Posterior vena cava (tissue), 2 donors: ENCODE measurements at regions of chr3 and their contacts with region 1.

Region 1: DNA sequence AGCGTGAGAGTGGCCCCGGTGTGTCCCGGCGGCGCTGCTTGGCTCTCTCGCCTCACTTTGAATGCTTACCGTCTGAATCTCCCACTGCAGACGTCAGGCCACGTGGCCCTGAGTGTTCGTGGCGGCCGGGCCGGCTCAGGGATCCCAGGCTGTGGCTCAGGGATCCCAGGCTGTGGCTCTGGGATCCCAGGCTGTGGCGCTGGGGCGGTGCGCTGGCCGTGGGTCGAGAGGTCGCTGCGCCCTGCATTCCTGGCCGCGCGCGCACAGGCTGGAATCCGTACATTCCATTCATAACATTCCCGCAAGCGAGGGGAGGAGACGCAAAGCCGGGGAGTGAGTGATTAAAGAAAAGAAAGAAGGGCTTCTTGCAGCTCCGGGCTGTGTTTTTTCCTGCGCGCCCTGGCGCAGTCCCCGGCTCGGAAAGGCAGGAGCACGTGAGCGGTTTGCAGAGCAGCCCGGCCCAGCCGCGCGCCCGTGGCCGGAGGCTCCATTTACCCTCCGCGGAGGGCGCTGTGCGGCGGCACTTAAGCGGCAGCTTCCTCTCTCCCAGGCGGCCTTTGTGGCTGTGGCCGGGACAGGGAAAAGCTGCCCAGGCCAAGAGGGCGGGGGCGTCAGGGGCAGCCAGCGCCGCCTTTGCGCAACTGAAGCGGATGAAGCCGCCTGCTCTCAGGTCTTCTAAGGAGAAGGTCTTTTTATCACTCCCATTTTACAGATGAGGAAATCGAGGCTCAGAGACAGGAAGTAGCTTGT is 87.0 kb upstream of the ALDH1L1 start:
- DNase-seq: peak; percentile 93

Region 2: DNA sequence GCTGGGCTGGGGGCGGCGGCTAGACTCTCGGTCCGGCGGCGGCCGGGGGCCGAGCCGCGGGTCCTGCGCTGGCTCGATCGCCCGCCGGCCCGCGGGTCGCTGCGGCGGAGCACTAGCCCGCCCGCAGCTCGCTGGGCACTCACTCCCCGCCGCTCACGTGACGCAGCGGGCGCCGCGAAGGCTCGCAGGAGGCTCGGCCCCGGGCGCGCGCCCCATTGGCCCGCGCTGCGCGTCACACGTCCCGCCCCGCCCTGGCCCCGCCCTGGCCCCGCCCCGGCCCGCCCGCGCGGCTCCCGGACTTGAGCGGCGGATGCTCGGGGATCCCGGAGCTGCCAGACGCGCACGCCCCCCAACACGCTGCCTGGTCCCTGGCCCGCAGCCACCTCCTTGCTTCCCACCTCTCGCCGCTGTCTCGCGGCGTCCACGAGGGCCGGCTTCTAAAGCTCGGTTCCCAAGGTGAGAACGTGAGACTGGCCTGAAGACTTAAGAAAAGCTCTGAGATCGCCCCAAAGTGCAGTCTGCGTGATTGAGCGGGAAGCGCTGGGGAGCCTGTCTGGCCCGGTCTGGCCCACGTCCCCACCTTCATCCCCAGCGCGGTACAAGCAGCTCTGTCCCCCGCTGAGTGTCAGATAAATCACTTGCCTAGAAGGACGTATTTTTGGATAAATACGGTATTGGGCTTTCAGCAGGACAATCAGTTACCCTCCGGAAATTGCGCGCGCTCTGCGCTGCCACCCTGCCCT is 90.1 kb after region 1 on chr3 and contains the start of gene KLF15:
- intact Hi-C with region 1: loop called (anchors 10 kb)
- DNase-seq: peak; percentile 95
- total RNA-seq, gene KLF15: 10.6 to 15.5 TPM